ENCODE measurements at regions of chr11 and their contacts with region 1.

Region 1: DNA sequence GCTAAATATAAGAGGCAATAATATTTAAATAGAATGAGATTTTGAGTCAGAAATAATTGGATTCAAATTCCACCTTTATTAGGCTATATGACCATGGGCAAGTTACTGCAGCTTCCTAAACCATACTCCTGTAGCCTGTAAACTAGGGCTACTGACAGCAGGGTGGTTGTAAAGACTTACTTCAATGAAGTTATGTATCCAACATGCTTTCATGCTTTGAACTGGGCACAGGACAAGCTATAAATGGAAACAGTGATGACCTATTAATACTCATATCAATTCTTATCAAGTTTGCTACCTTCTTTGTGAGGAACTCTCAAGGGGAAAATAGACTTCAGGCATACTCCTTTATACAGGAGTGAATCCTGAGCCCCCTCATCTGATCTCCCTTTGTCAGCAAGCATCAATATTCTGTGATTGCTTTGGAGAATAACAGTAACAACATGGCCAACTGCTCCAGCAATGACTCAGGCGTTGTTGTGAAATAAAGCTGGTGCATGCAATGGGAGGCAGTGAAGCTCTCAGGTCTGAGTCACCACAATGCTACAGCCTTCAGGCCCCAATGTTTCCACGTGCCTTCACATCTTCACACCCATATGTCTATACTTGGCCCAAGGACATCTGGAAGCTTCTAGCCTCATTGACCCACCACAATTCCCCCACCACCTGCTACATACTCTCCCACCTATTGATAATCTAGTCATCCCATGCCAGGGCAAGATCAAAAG is 102.5 kb downstream of the KCNA4 start:
- ATAC-seq: peak in 2 of 8 experiments; percentile 29 to 36
- H3K4me3 ChIP-seq: no peak overlapping the region
- H3K27ac ChIP-seq: no peak overlapping the region
- H3K4me1 ChIP-seq: no peaks in the 10 kb centered on the region

Region 2: GRCh38 chr11:30016588-30017363 is 102.4 kb after region 1 on chr11 and contains the start of gene KCNA4:
- in situ Hi-C with region 1: loop called in 1 of 9 experiments (anchors 25 kb)
- ATAC-seq: peak in 6 of 8 experiments; percentile 71 to 99 (median 98)
- H3K4me3 ChIP-seq: peak within 1 kb of the TSS; percentile 39 to 47 (median 43)
- H3K27ac ChIP-seq: no peak within 1 kb of the TSS
- H3K4me1 ChIP-seq: peaks cover 0 to 4% of the 10 kb centered on the region in 2 donors
- total RNA-seq, gene KCNA4: 0.10 to 2.1 (median 1.1) TPM in 7 of 8 experiments, not detected in the other

Region 3: DNA sequence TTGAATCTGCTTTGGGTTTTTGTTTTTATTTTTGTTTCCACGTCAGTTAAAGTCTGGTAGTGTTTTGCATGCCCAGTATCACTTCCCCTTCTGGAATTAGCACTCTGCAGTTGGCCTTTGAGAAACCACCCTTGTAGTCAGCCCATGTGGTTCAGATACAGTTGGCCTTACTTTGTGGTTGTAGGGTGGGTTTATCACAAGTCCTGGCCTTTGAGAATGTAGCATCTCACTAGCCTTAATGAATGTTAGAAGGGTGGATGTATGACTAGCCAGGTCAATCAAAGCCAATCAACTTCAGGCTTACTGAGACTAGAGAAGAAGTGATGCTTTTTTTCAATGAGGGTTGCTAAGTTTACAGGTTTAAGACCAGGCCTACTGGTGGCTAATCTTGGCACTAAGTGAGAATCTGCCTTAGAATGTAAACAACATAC is 428.4 kb after region 1 on chr11:
- in situ Hi-C with region 1: no loop called
- ATAC-seq: no peak
- H3K4me3 ChIP-seq: no peak overlapping the region
- H3K27ac ChIP-seq: no peak overlapping the region
- H3K4me1 ChIP-seq: no peaks in the 10 kb centered on the region